Panc1 (cell line): ENCODE measurements at regions of chr2 and their contacts with region 1.

Region 1: DNA sequence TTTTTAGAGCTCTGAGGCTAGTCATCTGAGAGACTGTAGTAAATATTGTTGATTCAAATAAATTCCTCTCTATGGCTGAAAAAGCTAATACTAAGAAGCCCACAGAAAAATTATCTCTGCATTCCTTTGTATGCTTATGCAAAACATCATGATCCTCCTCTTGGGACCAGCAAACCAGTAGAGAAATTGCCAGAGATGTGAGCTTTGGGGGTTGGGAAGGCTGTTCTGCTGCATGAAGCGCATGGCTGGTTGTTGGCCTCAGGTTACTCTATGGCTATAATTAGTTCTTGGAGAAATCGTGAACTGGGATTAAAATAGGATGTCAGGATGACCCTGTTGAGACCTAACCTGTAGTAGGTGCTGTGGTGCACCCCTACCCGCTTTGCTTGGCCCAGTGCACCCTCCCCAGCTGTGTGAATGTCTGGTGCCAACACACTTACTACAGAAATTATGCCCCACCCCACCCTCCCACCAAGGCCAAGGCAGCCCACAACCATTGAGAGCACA is 35.5 kb upstream of the C1D start:
- DNase-seq: no peak
- ATAC-seq: no peak
- H3K4me3 ChIP-seq: no peak overlapping the region
- H3K27ac ChIP-seq: no peak overlapping the region
- H3K4me1 ChIP-seq: no peaks in the 10 kb centered on the region
- H3K27me3 ChIP-seq: no peaks in the 10 kb centered on the region
- CTCF ChIP-seq: no peak

Region 2: GRCh38 chr2:66929632-66930338 is 1168.6 kb before region 1 on chr2:
- CTCF ChIA-PET with region 1: no interaction called
- POLR2A ChIA-PET with region 1: interaction called, 10 read pairs
- in situ Hi-C with region 1: no loop called
- intact Hi-C with region 1: no loop called
- DNase-seq: no peak
- ATAC-seq: no peak
- H3K4me3 ChIP-seq: no peak overlapping the region
- H3K27ac ChIP-seq: no peak overlapping the region
- H3K4me1 ChIP-seq: no peaks in the 10 kb centered on the region
- H3K27me3 ChIP-seq: no peaks in the 10 kb centered on the region
- CTCF ChIP-seq: no peak